Activated CD8-positive, alpha-beta memory T cell treated with anti-CD3 and anti-CD28 coated beads, Interleukin-2, amount 10 ng/mL, durations not matched to agents 7 days and 5 days (primary cell): ENCODE measurements at regions of chr1 and their contacts with region 1.

Region 1: DNA sequence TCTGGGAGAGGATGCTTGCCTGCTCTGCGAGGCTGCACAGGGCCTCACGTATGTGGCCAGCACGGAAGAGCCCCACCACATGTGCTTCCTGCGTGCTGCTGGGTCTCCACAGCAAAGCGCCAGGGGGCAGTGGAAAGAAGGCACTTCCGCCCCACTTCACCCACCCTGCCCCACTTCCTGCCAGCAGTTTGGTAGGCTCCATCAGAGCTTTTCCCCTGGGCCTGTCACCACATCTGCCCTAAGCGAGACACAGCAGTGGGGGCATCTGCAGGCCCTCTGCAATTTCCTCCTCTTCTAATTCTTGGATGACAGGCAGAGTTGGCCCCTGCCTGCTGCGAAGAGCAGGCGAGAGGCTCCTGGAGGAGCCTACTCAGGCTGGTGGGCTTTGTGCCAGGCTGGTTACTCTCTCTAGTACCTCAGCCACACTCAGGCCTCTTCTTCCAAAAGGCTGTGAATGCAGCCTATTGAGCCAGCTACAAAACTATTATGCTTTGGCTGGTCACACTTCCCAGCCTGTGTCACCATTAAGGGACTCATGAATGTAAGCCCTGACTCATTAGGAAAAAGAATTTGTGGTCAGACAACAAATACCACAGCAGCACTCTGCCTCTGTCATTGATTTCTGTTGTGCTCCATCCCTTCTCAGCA is 25.0 kb downstream of the CD244 start:
- DNase-seq: peak; percentile 96
- ATAC-seq: peak; percentile 91
- H3K4me3 Mint-ChIP-seq: peak overlapping the region; percentile 30
- H3K27ac Mint-ChIP-seq: peak overlapping the region; percentile 98
- H3K4me1 Mint-ChIP-seq: peaks cover 69% of the 10 kb centered on the region
- H3K27me3 Mint-ChIP-seq: no peaks in the 10 kb centered on the region

Region 2: DNA sequence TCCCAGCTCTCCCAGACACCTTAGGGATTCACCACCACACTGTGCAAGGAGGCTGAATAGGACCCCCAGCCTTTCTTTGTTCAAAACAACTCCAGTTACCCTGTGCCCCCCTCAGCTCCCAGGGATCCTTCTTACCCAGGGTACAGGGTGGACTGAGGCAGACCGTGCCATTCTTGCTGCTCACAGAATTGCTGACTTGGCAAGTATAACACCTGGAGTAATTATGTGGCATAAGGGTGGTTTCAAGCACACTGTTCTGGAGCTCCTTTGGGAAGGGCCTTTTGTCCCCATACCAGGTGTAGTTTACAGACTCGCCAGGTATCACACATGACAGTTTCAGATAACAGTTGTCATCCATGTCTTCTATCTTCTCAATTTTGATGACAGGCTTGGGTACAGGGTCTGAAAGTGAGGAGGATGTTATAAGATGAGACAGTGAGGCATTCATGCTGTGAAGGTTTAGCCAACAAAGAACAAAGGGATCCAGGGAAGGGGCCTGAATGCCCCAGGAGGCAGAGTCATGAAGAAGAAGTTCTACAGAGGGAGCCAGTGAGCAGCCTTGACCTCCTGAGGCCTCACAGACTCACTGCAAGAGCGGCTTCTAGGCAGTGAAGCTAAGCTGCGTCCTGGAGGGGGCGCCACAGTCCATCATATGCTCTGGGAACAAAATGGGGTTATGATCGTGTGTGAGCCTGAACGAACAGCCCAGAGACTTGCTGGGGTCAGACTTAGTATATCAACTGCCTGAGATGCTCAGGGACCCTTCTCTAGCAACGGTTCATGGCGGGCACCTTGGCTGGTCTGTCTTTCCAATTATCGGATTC is 156.4 kb before region 1 on chr1:
- CTCF ChIA-PET with region 1: interaction called, 14 read pairs
- DNase-seq: peak; percentile 93
- ATAC-seq: peak; percentile 72
- H3K4me3 Mint-ChIP-seq: no peak overlapping the region
- H3K27ac Mint-ChIP-seq: peak overlapping the region; percentile 92
- H3K4me1 Mint-ChIP-seq: peaks cover 83% of the 10 kb centered on the region
- H3K27me3 Mint-ChIP-seq: no peaks in the 10 kb centered on the region

Region 3: DNA sequence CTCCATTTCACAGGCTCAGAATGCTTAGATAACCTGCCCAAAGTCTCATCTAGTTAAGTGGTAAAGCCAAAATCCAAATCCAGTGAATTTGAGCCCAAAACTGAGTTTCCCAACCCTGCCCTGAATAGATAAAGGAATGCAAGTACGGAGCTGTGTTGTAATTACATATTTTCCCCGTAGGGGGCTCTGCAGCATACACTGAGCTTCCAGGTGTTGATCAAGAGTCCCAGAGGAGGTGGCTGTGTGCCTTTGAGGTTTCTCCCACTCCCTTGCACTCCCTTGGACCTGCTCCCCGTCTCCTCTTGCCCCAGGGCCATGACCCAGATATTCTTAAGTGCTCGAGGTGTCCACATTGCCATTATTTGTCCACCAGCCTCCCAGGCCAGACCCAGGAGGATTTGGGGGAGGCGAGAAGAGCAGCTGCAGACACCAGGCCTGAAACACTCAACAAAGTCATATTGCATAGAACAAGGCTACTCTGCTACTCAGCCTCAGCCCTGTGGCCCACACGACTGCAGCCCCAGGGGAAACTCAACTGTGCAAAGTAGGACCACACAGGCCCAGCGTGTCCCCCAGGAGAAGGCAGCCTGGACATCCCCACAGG is 60.1 kb before region 1 on chr1:
- CTCF ChIA-PET with region 1: interaction called, 54 read pairs
- DNase-seq: peak; percentile 66
- ATAC-seq: peak; percentile 52
- H3K4me3 Mint-ChIP-seq: no peak overlapping the region
- H3K27ac Mint-ChIP-seq: peak overlapping the region; percentile 22
- H3K4me1 Mint-ChIP-seq: peaks cover 28% of the 10 kb centered on the region
- H3K27me3 Mint-ChIP-seq: no peaks in the 10 kb centered on the region

Region 4: DNA sequence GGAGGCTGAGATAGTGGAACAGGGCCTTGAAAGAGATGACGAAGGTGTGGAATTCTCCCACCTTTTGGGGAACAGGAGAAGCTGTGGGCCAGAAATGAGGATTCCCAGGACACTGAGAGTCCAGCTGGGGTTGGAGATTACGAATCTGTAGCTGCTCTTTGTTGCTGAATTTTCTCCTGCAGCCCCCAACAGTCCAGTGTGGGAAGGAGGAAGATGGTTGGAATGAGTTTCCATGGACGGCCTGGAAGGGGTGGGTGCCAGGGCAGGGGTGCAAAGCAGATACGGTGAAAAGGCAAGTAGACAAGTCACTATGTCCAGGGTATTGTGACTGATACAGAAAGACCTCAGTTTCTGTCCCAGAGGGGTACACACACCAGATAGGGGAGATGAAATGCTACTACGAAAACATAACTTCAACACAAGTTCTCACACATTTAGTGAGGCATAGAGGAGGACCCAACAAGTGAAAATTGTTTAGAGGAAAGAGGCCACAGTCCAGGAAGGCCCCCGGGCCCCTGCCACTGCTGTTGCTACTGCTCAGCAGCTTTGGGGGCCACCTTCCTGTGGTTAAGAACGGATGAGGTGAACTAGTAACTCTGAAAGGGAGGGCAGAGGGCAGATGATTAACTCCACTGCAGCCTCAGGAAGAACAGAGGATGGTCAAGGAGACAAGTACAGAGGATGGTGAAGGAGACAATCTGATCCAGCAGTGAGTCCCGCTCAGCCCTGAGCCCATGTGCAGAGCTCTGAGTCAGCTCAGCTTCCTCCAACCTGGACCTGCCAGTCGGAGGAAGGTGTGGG is 17.7 kb after region 1 on chr1:
- CTCF ChIA-PET with region 1: interaction called, 85 read pairs
- DNase-seq: peak; percentile 85
- ATAC-seq: peak; percentile 83
- H3K4me3 Mint-ChIP-seq: no peak overlapping the region
- H3K27ac Mint-ChIP-seq: no peak overlapping the region
- H3K4me1 Mint-ChIP-seq: peaks cover 38% of the 10 kb centered on the region
- H3K27me3 Mint-ChIP-seq: no peaks in the 10 kb centered on the region

Region 5: DNA sequence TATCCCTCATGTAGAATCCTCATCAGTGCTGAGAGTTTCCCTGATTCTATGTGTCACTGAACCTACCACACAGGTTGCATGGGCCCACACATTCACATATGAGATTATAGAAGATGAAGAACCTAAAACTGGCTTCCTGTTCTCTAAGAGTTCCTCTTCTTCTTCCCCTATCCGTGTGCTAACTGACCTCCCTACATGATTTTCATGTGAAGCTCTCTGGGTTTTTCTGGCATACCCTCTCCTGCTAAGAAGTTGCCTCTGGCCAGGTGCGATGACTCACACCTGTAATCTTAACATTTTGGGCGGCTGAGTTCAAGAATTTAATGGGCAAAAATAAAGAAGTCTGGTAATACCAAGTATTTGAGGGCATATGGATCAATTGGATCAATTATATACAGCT is 30.5 kb after region 1 on chr1:
- CTCF ChIA-PET with region 1: interaction called, 85 read pairs
- DNase-seq: no peak
- ATAC-seq: no peak
- H3K4me3 Mint-ChIP-seq: no peak overlapping the region
- H3K27ac Mint-ChIP-seq: no peak overlapping the region
- H3K4me1 Mint-ChIP-seq: peaks cover 13% of the 10 kb centered on the region
- H3K27me3 Mint-ChIP-seq: no peaks in the 10 kb centered on the region

Region 6: GRCh38 chr1:160883581-160884513 is 46.2 kb after region 1 on chr1:
- CTCF ChIA-PET with region 1: interaction called, 86 read pairs
- DNase-seq: no peak
- ATAC-seq: no peak
- H3K4me3 Mint-ChIP-seq: no peak overlapping the region
- H3K27ac Mint-ChIP-seq: no peak overlapping the region
- H3K4me1 Mint-ChIP-seq: peaks cover 16% of the 10 kb centered on the region
- H3K27me3 Mint-ChIP-seq: no peaks in the 10 kb centered on the region

Region 7: GRCh38 chr1:160997323-160998038 is 159.8 kb after region 1 on chr1:
- CTCF ChIA-PET with region 1: interaction called, 31 read pairs
- DNase-seq: peak; percentile 66
- ATAC-seq: peak; percentile 73
- H3K4me3 Mint-ChIP-seq: no peak overlapping the region
- H3K27ac Mint-ChIP-seq: peak overlapping the region; percentile 21
- H3K4me1 Mint-ChIP-seq: peaks cover 19% of the 10 kb centered on the region
- H3K27me3 Mint-ChIP-seq: peaks cover 3% of the 10 kb centered on the region